ENCODE measurements at regions of chr10 and their contacts with region 1.

Region 1: GRCh38 chr10:52004342-52004949 is 305.1 kb upstream of the CSTF2T start:
- DNase-seq: peak; percentile 6
- H3K4me3 Mint-ChIP-seq: no peak overlapping the region
- H3K27ac Mint-ChIP-seq: no peak overlapping the region
- H3K4me1 Mint-ChIP-seq: no peaks in the 10 kb centered on the region
- H3K27me3 Mint-ChIP-seq: peaks cover 37% of the 10 kb centered on the region
- CTCF ChIP-seq: peak; percentile 34

Region 2: GRCh38 chr10:51063659-51064535 is 940.5 kb before region 1 on chr10:
- CTCF ChIA-PET with region 1: no interaction called
- intact Hi-C with region 1: loop called (anchors 5 kb)
- DNase-seq: no peak
- H3K4me3 Mint-ChIP-seq: no peak overlapping the region
- H3K27ac Mint-ChIP-seq: no peak overlapping the region
- H3K4me1 Mint-ChIP-seq: no peaks in the 10 kb centered on the region
- H3K27me3 Mint-ChIP-seq: no peaks in the 10 kb centered on the region
- CTCF ChIP-seq: peak; percentile 44

Region 3: GRCh38 chr10:52066383-52066782 is 61.9 kb after region 1 on chr10:
- CTCF ChIA-PET with region 1: no interaction called
- intact Hi-C with region 1: no loop called
- DNase-seq: no peak
- H3K4me3 Mint-ChIP-seq: no peak overlapping the region
- H3K27ac Mint-ChIP-seq: no peak overlapping the region
- H3K4me1 Mint-ChIP-seq: no peaks in the 10 kb centered on the region
- H3K27me3 Mint-ChIP-seq: no peaks in the 10 kb centered on the region
- CTCF ChIP-seq: no peak

Measured in Calu3 (cell line).